Naive thymus-derived CD4-positive, alpha-beta T cell (primary cell): ENCODE measurements at regions of chr17 and their contacts with region 1.

Region 1: GRCh38 chr17:83051395-83052233 is 27.8 kb upstream of the METRNL start:
- DNase-seq: peak; percentile 97 to 100 (median 99)
- ATAC-seq: peak; percentile 94
- H3K4me3 ChIP-seq: peak overlapping the region; percentile 75
- H3K4me3 Mint-ChIP-seq: peak overlapping the region; percentile 68 to 91 (median 83)
- H3K27ac ChIP-seq: peak overlapping the region; percentile 91
- H3K27ac Mint-ChIP-seq: peak overlapping the region; percentile 56 to 94 (median 89)
- H3K4me1 ChIP-seq: peaks cover 22 to 26% of the 10 kb centered on the region in 2 donors
- H3K4me1 Mint-ChIP-seq: peaks cover 17 to 39% (median 20%) of the 10 kb centered on the region in 7 donors
- H3K27me3 ChIP-seq: no peaks in the 10 kb centered on the region
- H3K27me3 Mint-ChIP-seq: no peaks in the 10 kb centered on the region

Region 2: DNA sequence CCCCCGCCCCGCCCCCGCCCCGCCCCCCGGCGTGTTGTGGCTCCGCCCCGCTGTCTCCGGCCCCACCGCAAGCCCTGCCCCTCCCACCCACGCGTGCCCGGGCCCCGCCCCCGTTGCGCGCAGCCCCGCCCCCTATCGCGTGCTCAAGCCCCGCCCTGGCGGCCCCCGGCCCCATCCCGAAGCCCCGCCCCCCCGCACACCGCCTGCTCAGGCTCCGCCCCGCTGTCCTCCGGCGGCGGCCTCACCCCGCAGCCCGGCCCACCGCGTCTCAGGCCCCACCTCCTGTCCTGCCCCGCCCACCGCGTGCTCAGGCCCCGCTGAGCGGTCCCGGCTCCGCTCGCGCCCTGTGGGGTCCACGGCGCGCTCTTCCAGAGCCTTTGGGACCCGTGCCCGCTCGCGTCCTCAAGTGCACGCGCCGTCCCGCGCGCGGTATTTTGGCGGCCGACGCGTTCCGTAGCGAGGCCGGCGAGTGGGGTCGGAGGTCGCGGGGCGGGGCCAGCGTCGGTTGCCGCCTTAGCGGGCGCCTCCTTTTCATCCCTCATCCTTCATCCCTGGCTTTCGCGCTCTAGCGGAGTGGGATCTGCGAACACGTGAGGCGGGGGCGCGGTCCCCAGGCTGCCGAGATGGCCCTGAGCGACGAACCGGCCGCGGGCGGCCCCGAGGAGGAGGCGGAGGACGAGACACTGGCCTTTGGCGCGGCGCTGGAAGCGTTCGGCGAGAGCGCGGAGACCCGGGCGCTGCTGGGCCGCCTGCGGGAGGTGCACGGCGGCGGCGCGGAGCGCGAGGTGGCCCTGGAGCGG is 299.8 kb before region 1 on chr17 and contains the start of gene TBCD:
- CTCF ChIA-PET with region 1: no interaction called
- POLR2A ChIA-PET with region 1: no interaction called
- intact Hi-C with region 1: loop called in 1 of 2 experiments (anchors 1 kb)
- DNase-seq: peak; percentile 80 to 95 (median 90)
- ATAC-seq: peak; percentile 91
- H3K4me3 ChIP-seq: peak within 1 kb of the TSS; percentile 80
- H3K4me3 Mint-ChIP-seq: peak within 1 kb of the TSS; percentile 68 to 91 (median 80)
- H3K27ac ChIP-seq: peak within 1 kb of the TSS; percentile 74
- H3K27ac Mint-ChIP-seq: peak within 1 kb of the TSS in 7 of 9 donors; percentile 11 to 77 (median 58)
- H3K4me1 ChIP-seq: peaks cover 7 to 8% of the 10 kb centered on the region in 2 donors
- H3K4me1 Mint-ChIP-seq: peaks cover 18 to 34% (median 26%) of the 10 kb centered on the region in 7 donors
- H3K27me3 ChIP-seq: no peaks in the 10 kb centered on the region
- H3K27me3 Mint-ChIP-seq: no peaks in the 10 kb centered on the region
- total RNA-seq, gene TBCD: 99.2 to 255 (median 226) TPM

Region 3: DNA sequence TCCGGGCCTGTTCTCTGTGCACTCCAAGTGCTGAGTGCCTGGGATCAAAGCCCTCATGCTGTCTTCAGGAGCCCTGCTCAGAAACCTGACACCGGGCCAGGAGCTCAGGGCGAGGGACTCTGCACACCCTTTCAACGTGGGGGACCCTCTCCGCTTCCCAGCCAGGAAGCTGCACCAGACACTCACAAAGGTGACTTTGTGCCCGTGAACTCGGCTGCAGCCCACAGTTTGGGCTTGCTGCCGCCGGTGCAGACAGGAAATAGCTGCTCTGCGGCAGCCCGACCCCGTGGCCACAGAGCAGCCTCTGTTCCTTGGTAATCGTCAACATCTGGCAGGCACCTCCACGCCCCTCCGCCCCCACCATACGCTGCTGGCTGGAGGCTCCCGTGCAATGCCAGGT is 65.6 kb before region 1 on chr17:
- CTCF ChIA-PET with region 1: no interaction called
- POLR2A ChIA-PET with region 1: interaction called, 5 read pairs
- intact Hi-C with region 1: loop called (anchors 5 kb)
- DNase-seq: peak; percentile 35 to 76 (median 67)
- ATAC-seq: peak; percentile 94
- H3K4me3 ChIP-seq: peak overlapping the region; percentile 31
- H3K4me3 Mint-ChIP-seq: peak overlapping the region; percentile 72 to 89 (median 80)
- H3K27ac ChIP-seq: peak overlapping the region; percentile 18
- H3K27ac Mint-ChIP-seq: peak overlapping the region; percentile 73 to 94 (median 88)
- H3K4me1 ChIP-seq: peaks cover 22 to 25% of the 10 kb centered on the region in 2 donors
- H3K4me1 Mint-ChIP-seq: peaks cover 22 to 50% (median 42%) of the 10 kb centered on the region in 7 donors
- H3K27me3 ChIP-seq: no peaks in the 10 kb centered on the region
- H3K27me3 Mint-ChIP-seq: peaks cover 0 to 13% (median 0%) of the 10 kb centered on the region in 5 donors

Region 4: GRCh38 chr17:83079352-83079747 is 27.7 kb after region 1 on chr17 and contains the start of gene METRNL:
- CTCF ChIA-PET with region 1: no interaction called
- POLR2A ChIA-PET with region 1: no interaction called
- intact Hi-C with region 1: loop called (anchors 1 to 2 kb)
- DNase-seq: peak in 7 of 9 donors; percentile 22 to 79 (median 36)
- ATAC-seq: peak; percentile 60
- H3K4me3 ChIP-seq: peak within 1 kb of the TSS; percentile 46
- H3K4me3 Mint-ChIP-seq: peak within 1 kb of the TSS in 8 of 10 donors; percentile 36 to 76 (median 52)
- H3K27ac ChIP-seq: no peak within 1 kb of the TSS
- H3K27ac Mint-ChIP-seq: no peak within 1 kb of the TSS
- H3K4me1 ChIP-seq: peaks cover 0 to 23% of the 10 kb centered on the region in 2 donors
- H3K4me1 Mint-ChIP-seq: peaks cover 0 to 27% (median 10%) of the 10 kb centered on the region in 7 donors
- H3K27me3 ChIP-seq: no peaks in the 10 kb centered on the region
- H3K27me3 Mint-ChIP-seq: peaks cover 0 to 35% (median 5%) of the 10 kb centered on the region in 5 donors
- total RNA-seq, gene METRNL: 1.0 to 147 (median 10.3) TPM